MCF 10A (cell line): ENCODE measurements at regions of chr14 and their contacts with region 1.

Region 1: DNA sequence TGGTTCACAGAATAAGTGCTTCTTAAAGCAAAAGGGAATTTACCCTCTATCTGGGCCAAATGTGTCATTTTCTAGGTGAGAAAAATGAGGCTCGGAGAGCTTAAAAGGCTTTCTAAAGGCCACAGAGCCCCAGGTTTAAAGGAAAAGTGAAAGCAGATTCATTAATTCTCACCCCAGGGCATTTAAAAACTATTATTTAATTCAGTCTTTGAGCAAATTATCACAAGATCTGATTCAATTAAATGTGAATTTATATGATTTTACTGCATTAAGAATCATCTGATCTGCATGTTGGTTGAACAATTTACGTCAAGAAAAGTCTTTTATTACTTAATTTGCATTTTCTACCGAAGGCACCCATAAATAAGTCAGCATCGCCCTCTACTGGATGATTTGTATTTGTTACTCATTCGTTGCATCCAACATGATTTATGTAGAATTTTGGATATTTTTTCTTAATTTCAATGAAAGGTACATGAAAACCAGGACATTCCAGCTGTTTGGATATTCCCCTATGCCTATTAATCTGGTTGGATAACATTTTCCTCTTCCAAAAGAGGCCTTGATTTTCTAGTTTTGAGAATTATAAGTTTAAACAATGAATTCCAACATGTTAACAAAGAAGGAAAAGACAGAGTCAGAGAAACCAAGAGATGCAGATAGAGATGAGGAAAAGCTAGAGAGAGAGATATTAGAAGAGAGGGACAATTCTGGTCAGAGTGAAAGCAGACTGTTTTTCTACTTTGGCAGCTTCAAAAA is 19.1 kb upstream of the DHRS7 start:
- DNase-seq: peak; percentile 79
- H3K4me3 Mint-ChIP-seq: peak overlapping the region; percentile 58
- H3K27ac Mint-ChIP-seq: peak overlapping the region; percentile 67
- H3K4me1 Mint-ChIP-seq: peaks cover 7% of the 10 kb centered on the region
- H3K27me3 Mint-ChIP-seq: no peaks in the 10 kb centered on the region
- CTCF ChIP-seq: peak; percentile 83

Region 2: GRCh38 chr14:59028476-59029202 is 1155.7 kb before region 1 on chr14:
- CTCF ChIA-PET with region 1: no interaction called
- POLR2A ChIA-PET with region 1: no interaction called
- intact Hi-C with region 1: loop called (anchors 10 kb)
- DNase-seq: peak; percentile 78
- H3K4me3 Mint-ChIP-seq: peak overlapping the region; percentile 35
- H3K27ac Mint-ChIP-seq: no peak overlapping the region
- H3K4me1 Mint-ChIP-seq: peaks cover 8% of the 10 kb centered on the region
- H3K27me3 Mint-ChIP-seq: peaks cover 41% of the 10 kb centered on the region
- CTCF ChIP-seq: peak; percentile 78

Region 3: GRCh38 chr14:59507063-59507780 is 677.1 kb before region 1 on chr14:
- CTCF ChIA-PET with region 1: no interaction called
- POLR2A ChIA-PET with region 1: no interaction called
- intact Hi-C with region 1: loop called (anchors 2 kb)
- DNase-seq: peak; percentile 72
- H3K4me3 Mint-ChIP-seq: no peak overlapping the region
- H3K27ac Mint-ChIP-seq: no peak overlapping the region
- H3K4me1 Mint-ChIP-seq: no peaks in the 10 kb centered on the region
- H3K27me3 Mint-ChIP-seq: no peaks in the 10 kb centered on the region
- CTCF ChIP-seq: peak; percentile 81

Region 4: GRCh38 chr14:59964251-59965007 is 219.9 kb before region 1 on chr14:
- CTCF ChIA-PET with region 1: interaction called, 118 read pairs
- POLR2A ChIA-PET with region 1: interaction called, 9 read pairs
- intact Hi-C with region 1: loop called (anchors 1 kb)
- DNase-seq: peak; percentile 3
- H3K4me3 Mint-ChIP-seq: peak overlapping the region; percentile 83
- H3K27ac Mint-ChIP-seq: no peak overlapping the region
- H3K4me1 Mint-ChIP-seq: peaks cover 18% of the 10 kb centered on the region
- H3K27me3 Mint-ChIP-seq: no peaks in the 10 kb centered on the region
- CTCF ChIP-seq: no peak

Region 5: DNA sequence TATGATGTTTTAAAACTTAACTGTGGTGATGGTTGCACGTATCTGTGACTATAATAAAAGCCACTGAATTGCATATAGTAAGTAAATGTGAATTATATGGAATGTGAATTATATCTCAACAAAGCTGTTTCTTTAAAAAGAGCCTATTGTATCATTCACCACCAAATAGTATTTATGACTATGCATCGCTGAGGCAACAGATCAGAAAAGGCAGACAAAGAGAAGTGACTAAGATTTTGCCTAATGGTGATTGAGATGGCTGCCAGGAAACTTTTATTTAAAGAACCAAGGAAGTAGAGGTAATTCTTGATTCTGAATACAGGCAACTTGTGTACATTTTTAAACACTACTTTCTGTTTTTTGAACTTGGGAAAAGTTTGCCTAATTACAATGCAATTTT is 50.8 kb before region 1 on chr14:
- CTCF ChIA-PET with region 1: no interaction called
- POLR2A ChIA-PET with region 1: no interaction called
- intact Hi-C with region 1: no loop called
- DNase-seq: no peak
- H3K4me3 Mint-ChIP-seq: no peak overlapping the region
- H3K27ac Mint-ChIP-seq: peak overlapping the region; percentile 6
- H3K4me1 Mint-ChIP-seq: no peaks in the 10 kb centered on the region
- H3K27me3 Mint-ChIP-seq: no peaks in the 10 kb centered on the region
- CTCF ChIP-seq: no peak

Region 6: DNA sequence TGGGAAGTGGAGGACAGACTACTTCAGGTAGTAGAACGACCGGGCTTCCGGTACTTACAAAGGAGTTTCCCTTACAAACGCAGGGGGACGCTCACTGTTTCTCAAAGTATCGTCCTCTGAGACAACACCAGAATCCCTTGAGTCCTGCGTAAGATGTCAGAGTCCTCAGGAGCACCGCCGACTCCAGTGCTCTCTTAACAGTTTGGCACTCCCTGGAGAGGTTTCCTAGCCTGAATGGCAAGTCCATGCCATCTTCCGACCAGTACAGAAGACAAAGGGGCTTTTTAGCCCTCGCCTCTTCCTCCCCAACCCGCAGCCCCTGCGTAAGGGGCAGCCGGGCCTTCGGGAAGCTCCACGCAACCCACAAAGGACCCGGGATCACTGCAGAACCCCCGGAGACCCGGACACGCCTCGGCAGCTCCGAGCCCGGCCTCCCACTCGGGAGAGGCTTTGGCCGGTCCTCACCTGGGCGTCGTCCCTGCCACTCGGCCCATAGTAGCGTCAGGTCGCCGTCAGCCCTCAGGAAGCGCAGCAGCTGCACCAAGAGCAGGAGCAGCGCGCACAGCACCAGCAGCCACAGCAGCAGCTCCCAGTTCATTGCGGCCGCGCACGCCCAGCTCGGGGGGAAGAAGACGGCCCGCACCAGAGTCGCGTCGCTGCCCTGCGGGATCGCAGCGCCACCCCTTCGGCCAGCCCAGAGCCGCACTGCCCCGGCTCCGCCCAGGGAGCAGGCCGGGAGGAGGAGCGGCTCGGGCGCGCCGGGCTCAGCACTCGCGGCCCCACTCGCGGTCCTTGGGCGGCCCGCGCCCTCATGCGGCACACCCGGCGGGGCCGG is 19.4 kb before region 1 on chr14 and contains the start of gene DHRS7:
- CTCF ChIA-PET with region 1: interaction called, 17 read pairs
- POLR2A ChIA-PET with region 1: interaction called, 15 read pairs
- intact Hi-C with region 1: loop called (anchors 2 kb)
- DNase-seq: peak; percentile 79
- H3K4me3 Mint-ChIP-seq: peak within 1 kb of the TSS; percentile 89
- H3K27ac Mint-ChIP-seq: peak within 1 kb of the TSS; percentile 81
- H3K4me1 Mint-ChIP-seq: peaks cover 14% of the 10 kb centered on the region
- H3K27me3 Mint-ChIP-seq: no peaks in the 10 kb centered on the region
- CTCF ChIP-seq: peak; percentile 52
- total RNA-seq, gene DHRS7: 71.4 and 96.4 TPM in 2 replicates

Region 7: DNA sequence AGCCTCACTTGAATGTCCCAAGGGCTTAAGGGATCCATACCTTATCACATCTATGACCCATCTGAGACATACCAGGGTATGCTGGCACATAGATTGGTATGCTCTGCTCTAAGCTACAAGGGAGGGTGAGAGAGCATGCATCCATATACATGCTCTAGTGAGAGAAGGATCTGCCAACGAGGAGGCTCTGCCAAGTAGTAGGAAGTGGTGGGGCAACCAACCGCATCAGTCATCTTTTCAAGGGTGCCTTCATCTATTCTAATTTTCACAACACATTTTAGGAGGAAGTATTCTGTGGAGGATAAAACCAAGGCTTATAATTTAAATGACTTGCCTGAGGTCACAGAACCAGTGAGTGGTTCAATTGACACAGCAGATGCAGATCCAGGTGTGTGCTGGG is 58.1 kb after region 1 on chr14:
- CTCF ChIA-PET with region 1: no interaction called
- POLR2A ChIA-PET with region 1: no interaction called
- intact Hi-C with region 1: no loop called
- DNase-seq: no peak
- H3K4me3 Mint-ChIP-seq: no peak overlapping the region
- H3K27ac Mint-ChIP-seq: no peak overlapping the region
- H3K4me1 Mint-ChIP-seq: no peaks in the 10 kb centered on the region
- H3K27me3 Mint-ChIP-seq: no peaks in the 10 kb centered on the region
- CTCF ChIP-seq: no peak

Region 8: DNA sequence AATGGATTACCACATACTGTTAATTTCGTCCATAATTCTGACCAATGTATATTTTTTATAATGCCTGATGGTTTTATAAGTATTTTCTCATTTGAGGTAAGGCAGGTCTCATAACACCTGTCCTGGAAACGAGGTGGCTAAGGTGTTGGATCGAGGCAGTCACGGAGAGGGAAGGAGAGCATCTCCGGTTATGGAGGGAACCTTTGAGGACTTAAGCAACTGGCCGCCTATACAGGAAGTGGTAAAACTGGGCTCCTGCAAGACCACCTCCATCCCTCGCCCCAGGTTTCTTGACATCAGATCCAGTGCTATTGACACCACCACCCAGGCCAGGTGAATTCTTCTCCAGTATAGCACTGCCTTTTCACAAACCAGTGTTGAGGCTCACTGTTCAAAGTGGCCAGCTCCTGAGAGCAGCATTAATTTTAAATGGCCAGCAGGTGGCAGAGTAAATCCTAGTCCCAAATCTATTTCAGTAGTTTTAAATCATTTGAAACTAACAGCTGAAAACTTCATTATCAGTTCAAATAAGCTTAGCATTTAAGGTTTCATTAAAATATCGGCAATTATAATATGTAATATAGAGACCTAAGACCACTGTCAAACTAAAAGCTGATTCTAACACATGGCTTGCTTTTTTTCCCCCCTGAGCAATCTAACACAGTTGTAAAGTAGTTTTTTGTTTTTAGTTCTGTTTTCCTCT is 165.5 kb after region 1 on chr14:
- CTCF ChIA-PET with region 1: interaction called, 5 read pairs
- POLR2A ChIA-PET with region 1: no interaction called
- intact Hi-C with region 1: loop called (anchors 10 kb)
- DNase-seq: peak; percentile 65
- H3K4me3 Mint-ChIP-seq: no peak overlapping the region
- H3K27ac Mint-ChIP-seq: no peak overlapping the region
- H3K4me1 Mint-ChIP-seq: no peaks in the 10 kb centered on the region
- H3K27me3 Mint-ChIP-seq: no peaks in the 10 kb centered on the region
- CTCF ChIP-seq: peak; percentile 49

Region 9: GRCh38 chr14:60561845-60562746 is 377.8 kb after region 1 on chr14:
- CTCF ChIA-PET with region 1: interaction called, 16 read pairs
- POLR2A ChIA-PET with region 1: no interaction called
- intact Hi-C with region 1: loop called (anchors 1 kb)
- DNase-seq: peak; percentile 71
- H3K4me3 Mint-ChIP-seq: no peak overlapping the region
- H3K27ac Mint-ChIP-seq: no peak overlapping the region
- H3K4me1 Mint-ChIP-seq: no peaks in the 10 kb centered on the region
- H3K27me3 Mint-ChIP-seq: no peaks in the 10 kb centered on the region
- CTCF ChIP-seq: peak; percentile 61